RWPE1 (cell line): ENCODE measurements at regions of chr3 and their contacts with region 1.

Region 1: GRCh38 chr3:124409789-124410261 is 320.4 kb upstream of the UMPS start:
- DNase-seq: peak; percentile 40
- H3K27ac ChIP-seq: no peak overlapping the region
- CTCF ChIP-seq: no peak

Region 2: GRCh38 chr3:124347418-124347817 is 62.4 kb before region 1 on chr3:
- CTCF ChIA-PET with region 1: no interaction called
- POLR2A ChIA-PET with region 1: no interaction called
- DNase-seq: no peak
- H3K27ac ChIP-seq: no peak overlapping the region
- CTCF ChIP-seq: no peak

Region 3: DNA sequence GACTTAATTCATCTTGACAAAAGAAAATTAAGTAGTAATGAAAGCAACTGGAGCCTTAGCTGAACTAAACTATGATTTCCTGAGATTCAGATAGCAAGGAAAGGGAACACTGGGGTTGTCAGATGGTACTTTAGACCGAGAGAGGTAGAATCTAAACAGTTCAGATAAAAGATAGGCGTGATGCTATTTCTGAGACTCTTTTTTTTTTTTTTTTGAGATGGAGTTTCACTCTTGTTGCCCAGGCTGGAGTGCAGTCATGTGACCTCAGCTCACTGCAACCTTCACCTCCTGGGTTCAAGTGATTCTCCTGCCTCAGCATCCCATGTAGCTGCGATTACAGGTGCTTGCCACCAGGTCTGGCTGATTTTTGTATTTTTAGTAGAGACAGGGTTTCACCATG is 40.5 kb after region 1 on chr3:
- CTCF ChIA-PET with region 1: no interaction called
- POLR2A ChIA-PET with region 1: interaction called, 11 read pairs
- DNase-seq: no peak
- H3K27ac ChIP-seq: no peak overlapping the region
- CTCF ChIP-seq: no peak

Region 4: DNA sequence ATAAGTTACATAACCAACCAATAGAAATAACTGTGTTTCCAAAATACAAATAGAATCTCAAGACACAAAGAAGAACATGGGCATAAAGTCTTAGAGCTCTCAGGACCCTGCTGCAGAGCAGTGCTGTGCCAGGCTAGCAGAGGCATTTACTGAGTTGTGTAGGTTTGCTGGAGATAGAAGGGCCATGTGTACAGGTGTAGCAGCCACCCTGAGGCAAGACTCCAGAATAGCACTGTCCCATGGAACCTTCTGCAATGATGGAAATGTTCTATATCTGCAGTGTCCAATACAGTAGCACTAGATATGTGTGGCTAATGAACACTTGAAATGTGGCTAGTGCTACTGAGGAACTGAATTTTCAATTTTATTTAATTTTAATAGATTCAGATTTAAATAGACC is 53.4 kb after region 1 on chr3:
- CTCF ChIA-PET with region 1: no interaction called
- POLR2A ChIA-PET with region 1: no interaction called
- DNase-seq: no peak
- H3K27ac ChIP-seq: no peak overlapping the region
- CTCF ChIP-seq: no peak

Region 5: DNA sequence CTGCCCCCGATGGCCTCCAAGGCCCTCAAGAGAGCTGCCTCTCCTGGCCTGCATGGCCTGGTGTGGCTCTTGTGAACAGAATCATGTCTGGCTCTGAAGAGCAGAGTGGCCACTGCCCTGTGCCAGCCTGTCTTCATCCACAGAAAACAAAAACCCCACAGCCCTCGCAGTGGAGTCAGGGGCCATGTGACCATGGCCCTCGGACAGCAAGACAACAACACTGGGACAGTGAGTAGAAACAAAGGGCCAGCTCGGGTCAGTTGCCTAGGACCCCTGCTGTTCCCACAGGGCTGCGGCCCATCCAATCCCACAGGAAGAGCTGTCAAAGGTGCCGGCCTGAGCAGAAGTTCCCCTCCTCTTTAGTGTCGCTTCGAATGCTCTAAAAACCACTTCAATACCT is 392.9 kb after region 1 on chr3:
- CTCF ChIA-PET with region 1: no interaction called
- POLR2A ChIA-PET with region 1: no interaction called
- DNase-seq: no peak
- H3K27ac ChIP-seq: no peak overlapping the region
- CTCF ChIP-seq: no peak